ENCODE measurements at regions of chr20 and their contacts with region 1.

Region 1: GRCh38 chr20:24783631-24784492 is 165.2 kb upstream of the CST7 start:
- DNase-seq: no peak
- CTCF ChIP-seq: peak; percentile 7

Region 2: GRCh38 chr20:24798930-24799705 is 15.3 kb after region 1 on chr20:
- CTCF ChIA-PET with region 1: interaction called, 12 read pairs
- POLR2A ChIA-PET with region 1: no interaction called
- DNase-seq: no peak
- CTCF ChIP-seq: no peak

Region 3: GRCh38 chr20:24917797-24918578 is 134.1 kb after region 1 on chr20:
- CTCF ChIA-PET with region 1: interaction called, 15 read pairs
- POLR2A ChIA-PET with region 1: no interaction called
- DNase-seq: peak; percentile 81
- CTCF ChIP-seq: peak; percentile 94